ENCODE measurements at regions of chr10 and their contacts with region 1.

Region 1: GRCh38 chr10:43407576-43408330 is 1.2 kb downstream of the HNRNPF start:
- DNase-seq: peak; percentile 90 to 91
- ATAC-seq: peak; percentile 76 to 82
- H3K4me3 ChIP-seq: peak overlapping the region; percentile 69 to 90 (median 84)
- H3K27ac ChIP-seq: peak overlapping the region; percentile 95 to 98 (median 96)
- H3K4me1 ChIP-seq: peaks cover 24 to 37% of the 10 kb centered on the region in 2 donors
- H3K27me3 ChIP-seq: no peaks in the 10 kb centered on the region
- CTCF ChIP-seq: peak in 4 of 5 experiments; percentile 32 to 54 (median 47)
- POLR2A ChIP-seq: peak; percentile 82 to 87

Region 2: GRCh38 chr10:43420369-43421200 is 12.8 kb after region 1 on chr10:
- in situ Hi-C with region 1: no loop called
- intact Hi-C with region 1: loop called (anchors 1 kb)
- DNase-seq: peak; percentile 87 to 95
- ATAC-seq: peak; percentile 92 to 93
- H3K4me3 ChIP-seq: peak overlapping the region; percentile 60 to 87 (median 79)
- H3K27ac ChIP-seq: peak overlapping the region; percentile 92 to 100 (median 96)
- H3K4me1 ChIP-seq: peaks cover 0 to 11% of the 10 kb centered on the region in 2 donors
- H3K27me3 ChIP-seq: no peaks in the 10 kb centered on the region
- CTCF ChIP-seq: peak in 1 of 5 experiments; percentile 21
- POLR2A ChIP-seq: peak; percentile 68 to 88

Region 3: GRCh38 chr10:43436400-43437140 is 28.8 kb after region 1 on chr10 and contains the start of gene ZNF487:
- in situ Hi-C with region 1: no loop called
- intact Hi-C with region 1: loop called (anchors 1 kb)
- DNase-seq: peak; percentile 81 to 85
- ATAC-seq: peak; percentile 95 to 96
- H3K4me3 ChIP-seq: peak within 1 kb of the TSS; percentile 70 to 87 (median 77)
- H3K27ac ChIP-seq: peak within 1 kb of the TSS; percentile 91 to 99 (median 96)
- H3K4me1 ChIP-seq: peaks cover 6 to 8% of the 10 kb centered on the region in 2 donors
- H3K27me3 ChIP-seq: no peaks in the 10 kb centered on the region
- CTCF ChIP-seq: peak in 3 of 5 experiments; percentile 10 to 39 (median 31)
- POLR2A ChIP-seq: peak; percentile 81 to 94
- total RNA-seq, gene ZNF487: 0.80 to 2.4 (median 1.7) TPM

Region 4: DNA sequence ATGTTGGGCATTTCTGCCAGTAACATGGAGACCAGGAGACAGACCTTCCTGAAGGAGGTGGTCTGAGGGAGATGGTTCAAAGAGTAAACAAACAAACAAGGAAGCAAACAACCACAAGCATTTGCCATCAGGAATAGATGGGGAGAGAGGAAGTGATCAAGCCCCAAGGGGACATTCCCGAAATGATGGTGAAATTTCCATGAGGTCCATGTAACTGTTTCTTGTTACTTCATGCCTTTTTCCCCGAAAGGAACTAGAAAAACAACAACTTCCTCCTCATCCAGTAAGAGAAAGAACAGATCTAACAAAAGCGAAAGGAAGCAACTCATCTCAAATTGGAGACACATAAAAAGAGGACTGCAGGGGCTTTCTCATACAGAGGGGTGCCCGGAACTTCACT is 393.4 kb after region 1 on chr10:
- in situ Hi-C with region 1: no loop called
- intact Hi-C with region 1: no loop called
- DNase-seq: no peak
- ATAC-seq: peak in 1 of 2 donors; percentile 47
- H3K4me3 ChIP-seq: no peak overlapping the region
- H3K27ac ChIP-seq: peak overlapping the region; percentile 11 to 42 (median 27)
- H3K4me1 ChIP-seq: no peaks in the 10 kb centered on the region
- H3K27me3 ChIP-seq: no peaks in the 10 kb centered on the region
- CTCF ChIP-seq: no peak
- POLR2A ChIP-seq: no peak

Measured in gastrocnemius medialis (tissue), 4 donors.